HEK293T (cell line): ENCODE measurements at regions of chr17 and their contacts with region 1.

Region 1: GRCh38 chr17:8268550-8269298 is 19.6 kb downstream of the PFAS start:
- DNase-seq: no peak

Region 2: GRCh38 chr17:8255499-8255898 is 13.2 kb before region 1 on chr17:
- CTCF ChIA-PET with region 1: no interaction called
- POLR2A ChIA-PET with region 1: no interaction called
- DNase-seq: no peak

Region 3: GRCh38 chr17:8288336-8289102 is 19.8 kb after region 1 on chr17 and contains the start of gene RANGRF:
- CTCF ChIA-PET with region 1: interaction called, 5 read pairs
- POLR2A ChIA-PET with region 1: interaction called, 11 read pairs
- DNase-seq: peak; percentile 93